HepG2 (cell line): ENCODE measurements at regions of chr17 and their contacts with region 1.

Region 1: GRCh38 chr17:39461113-39461925 is at the start of gene CDK12:
- DNase-seq: peak; percentile 100
- ATAC-seq: peak; percentile 86
- H3K4me3 ChIP-seq: peak within 1 kb of the TSS; percentile 86 to 99 (median 96)
- H3K27ac ChIP-seq: peak within 1 kb of the TSS; percentile 98
- H3K4me1 ChIP-seq: peaks cover 45% of the 10 kb centered on the region
- H3K27me3 ChIP-seq: no peaks in the 10 kb centered on the region; a peak in 1 of 5 replicates
- CTCF ChIP-seq: 0 out of 2 replicates have a peak, but pooled peaks have one; percentile 24
- EP300 ChIP-seq: peak in 1 of 2 experiments; percentile 81; a peak in 2 of 4 replicates
- POLR2A ChIP-seq: peak; percentile 97 to 99
- RAD21 ChIP-seq: peak; percentile 70
- total RNA-seq, gene CDK12: 88.6 and 95.9 TPM in 2 replicates

Region 2: DNA sequence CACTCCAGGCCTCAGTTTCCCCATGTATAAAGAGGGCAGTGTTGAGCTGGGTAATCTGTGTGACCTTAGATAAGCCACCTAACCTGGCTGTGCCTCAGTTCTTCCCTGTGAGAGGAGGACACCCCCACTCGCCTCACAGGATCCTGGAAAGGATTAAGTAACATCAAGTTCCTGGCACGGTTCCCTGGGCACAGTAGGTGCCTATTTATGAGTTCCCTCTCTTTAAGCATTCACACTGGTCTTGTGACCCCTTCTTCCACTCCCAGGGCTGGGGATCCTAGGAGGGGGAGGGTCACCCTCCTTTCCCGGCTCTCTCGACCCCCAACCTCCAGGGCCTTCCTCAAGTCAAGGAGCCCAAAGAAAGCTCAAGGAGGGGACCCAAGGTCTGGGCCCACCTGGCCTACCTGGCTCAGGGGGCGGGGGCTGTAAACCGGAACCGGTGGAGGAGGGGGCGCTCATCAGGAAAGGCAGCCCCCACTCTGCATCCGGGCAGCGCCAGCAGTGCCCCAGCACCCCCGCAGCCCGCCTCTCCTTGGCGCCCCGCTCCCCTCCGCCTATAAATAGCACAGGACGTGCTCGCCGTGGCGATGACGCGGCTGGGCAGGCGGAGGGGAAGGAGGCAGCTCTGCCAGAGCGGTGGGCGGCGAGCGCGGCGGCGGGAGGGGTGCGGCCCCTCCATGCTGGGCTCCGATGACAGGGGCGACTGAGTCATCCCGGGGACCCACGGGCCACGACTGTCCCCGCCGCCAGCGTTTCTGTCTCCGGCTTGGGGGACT is 251.8 kb before region 1 on chr17:
- CTCF ChIA-PET with region 1: no interaction called
- POLR2A ChIA-PET with region 1: no interaction called
- in situ Hi-C with region 1: no loop called
- intact Hi-C with region 1: no loop called
- DNase-seq: no peak
- ATAC-seq: no peak
- H3K4me3 ChIP-seq: no peak overlapping the region
- H3K27ac ChIP-seq: no peak overlapping the region
- H3K4me1 ChIP-seq: no peaks in the 10 kb centered on the region
- H3K27me3 ChIP-seq: peaks cover 13 to 58% of the 10 kb centered on the region in 2 experiments; a peak in 4 of 5 replicates
- CTCF ChIP-seq: no peak
- EP300 ChIP-seq: no peak
- POLR2A ChIP-seq: no peak
- RAD21 ChIP-seq: no peak

Region 3: GRCh38 chr17:39401412-39402243 is 59.7 kb before region 1 on chr17 and contains the start of gene FBXL20:
- CTCF ChIA-PET with region 1: no interaction called
- POLR2A ChIA-PET with region 1: interaction called, 19 read pairs
- in situ Hi-C with region 1: no loop called
- intact Hi-C with region 1: no loop called
- DNase-seq: peak; percentile 89
- ATAC-seq: peak; percentile 85
- H3K4me3 ChIP-seq: peak within 1 kb of the TSS; percentile 96 to 99 (median 97)
- H3K27ac ChIP-seq: peak within 1 kb of the TSS; percentile 87
- H3K4me1 ChIP-seq: peaks cover 20% of the 10 kb centered on the region
- H3K27me3 ChIP-seq: no peaks in the 10 kb centered on the region; a peak in 1 of 5 replicates
- CTCF ChIP-seq: no peak
- EP300 ChIP-seq: no peak
- POLR2A ChIP-seq: peak; percentile 88 to 93
- RAD21 ChIP-seq: peak; percentile 36
- total RNA-seq, gene FBXL20: 10.2 and 10.6 TPM in 2 replicates

Region 4: GRCh38 chr17:39450847-39451581 is 10.3 kb before region 1 on chr17 and contains the start of gene MED1:
- CTCF ChIA-PET with region 1: no interaction called
- POLR2A ChIA-PET with region 1: interaction called, 302 read pairs
- in situ Hi-C with region 1: no loop called
- intact Hi-C with region 1: loop called (anchors 1 kb)
- DNase-seq: peak; percentile 99
- ATAC-seq: peak; percentile 79
- H3K4me3 ChIP-seq: peak within 1 kb of the TSS; percentile 92 to 98 (median 92)
- H3K27ac ChIP-seq: peak within 1 kb of the TSS; percentile 94
- H3K4me1 ChIP-seq: peaks cover 65% of the 10 kb centered on the region
- H3K27me3 ChIP-seq: no peaks in the 10 kb centered on the region; a peak in 1 of 5 replicates
- CTCF ChIP-seq: no peak
- EP300 ChIP-seq: 0 out of 4 replicates have a peak, but pooled peaks of 1 of the 2 experiments have one; percentile 36
- POLR2A ChIP-seq: peak; percentile 81 to 94
- RAD21 ChIP-seq: no peak
- total RNA-seq, gene MED1: 37.5 and 60.9 TPM in 2 replicates

Region 5: GRCh38 chr17:39485555-39485954 is 24.2 kb after region 1 on chr17:
- CTCF ChIA-PET with region 1: no interaction called
- POLR2A ChIA-PET with region 1: interaction called, 18 read pairs
- in situ Hi-C with region 1: no loop called
- intact Hi-C with region 1: no loop called
- DNase-seq: no peak
- ATAC-seq: no peak
- H3K4me3 ChIP-seq: no peak overlapping the region
- H3K27ac ChIP-seq: no peak overlapping the region
- H3K4me1 ChIP-seq: no peaks in the 10 kb centered on the region
- H3K27me3 ChIP-seq: no peaks in the 10 kb centered on the region
- CTCF ChIP-seq: no peak
- EP300 ChIP-seq: no peak
- POLR2A ChIP-seq: no peak
- RAD21 ChIP-seq: no peak

Region 6: DNA sequence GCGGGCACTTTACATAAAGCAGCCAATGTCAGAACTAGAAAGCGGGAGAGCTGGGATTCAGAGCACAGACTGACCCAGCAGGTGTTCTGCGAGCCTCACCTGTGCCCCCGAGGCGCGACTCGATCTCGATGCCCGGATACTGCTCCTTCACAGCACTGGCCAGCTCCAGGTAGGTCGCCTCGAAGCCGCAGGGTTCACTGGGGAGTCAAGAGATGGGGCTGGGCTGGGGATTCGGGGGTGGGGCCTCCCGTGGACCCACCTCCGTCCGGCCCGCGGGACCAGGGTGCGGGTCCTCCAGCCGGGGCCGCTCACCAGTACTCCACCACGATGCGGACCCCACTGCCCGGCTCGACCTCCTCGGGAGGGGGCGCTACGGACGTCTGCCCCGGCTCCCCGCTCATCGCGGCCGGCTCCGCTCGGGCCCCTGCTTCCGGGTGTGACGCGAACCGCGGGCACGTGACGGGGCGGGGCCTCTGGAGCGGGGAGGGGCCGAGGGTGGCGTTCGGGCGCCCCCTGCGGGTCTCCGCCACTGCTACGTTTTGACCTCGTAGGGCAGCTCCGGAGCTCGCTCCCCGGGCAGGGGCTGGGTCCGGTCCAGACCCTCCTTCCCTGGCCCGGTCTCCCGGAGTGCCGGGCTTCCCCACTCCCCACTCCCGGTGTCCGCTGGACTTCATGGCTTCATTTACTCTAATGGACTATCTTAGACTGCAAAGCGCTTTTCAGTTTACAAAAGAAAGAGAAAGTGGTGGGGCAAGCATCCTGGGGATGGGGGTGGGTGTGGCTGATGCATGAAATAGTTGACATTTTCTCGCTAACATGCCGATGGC is 269.0 kb after region 1 on chr17 and contains the start of gene MIEN1:
- CTCF ChIA-PET with region 1: no interaction called
- POLR2A ChIA-PET with region 1: no interaction called
- in situ Hi-C with region 1: no loop called
- intact Hi-C with region 1: loop called (anchors 10 kb)
- DNase-seq: peak; percentile 78
- ATAC-seq: peak; percentile 89
- H3K4me3 ChIP-seq: peak within 1 kb of the TSS; percentile 68 to 81 (median 74)
- H3K27ac ChIP-seq: peak within 1 kb of the TSS; percentile 65
- H3K4me1 ChIP-seq: peaks cover 21% of the 10 kb centered on the region
- H3K27me3 ChIP-seq: no peaks in the 10 kb centered on the region
- CTCF ChIP-seq: peak; percentile 93
- EP300 ChIP-seq: 0 out of 4 replicates have a peak, but pooled peaks have one; percentile 3 to 49
- POLR2A ChIP-seq: peak; percentile 56 to 84
- RAD21 ChIP-seq: peak; percentile 97
- total RNA-seq, gene MIEN1: 40.6 and 48.6 TPM in 2 replicates